Mammary epithelial cell (primary cell): ENCODE measurements at regions of chr19 and their contacts with region 1.

Region 1: DNA sequence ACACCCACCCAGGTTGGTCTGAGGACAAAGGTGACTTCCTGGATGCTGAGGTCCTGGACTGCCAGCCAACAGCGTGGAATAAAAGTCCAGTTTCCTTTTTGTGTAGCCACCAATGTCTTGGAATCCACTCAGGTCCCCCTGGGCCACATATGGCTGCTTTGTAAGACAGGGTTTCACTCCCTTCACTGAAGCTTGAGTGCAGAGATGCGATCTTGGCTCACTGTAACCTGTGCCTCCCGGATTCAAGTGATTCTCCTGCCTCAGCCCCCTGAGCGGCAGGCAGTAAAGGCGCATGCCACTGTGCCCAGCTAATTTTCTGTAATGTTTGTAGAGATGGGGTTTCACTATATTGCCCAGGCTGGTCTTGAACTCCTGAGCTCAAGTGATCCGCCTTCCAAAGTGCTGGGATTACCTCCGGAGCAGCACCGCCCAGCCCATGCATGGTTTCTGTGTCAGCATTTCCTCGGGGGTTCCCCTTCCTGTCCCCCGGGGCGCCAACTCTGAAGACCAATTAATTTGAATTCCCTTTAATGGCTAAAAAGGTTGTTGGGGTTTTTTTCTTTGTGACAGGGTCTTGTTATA is 17.5 kb downstream of the KANK2 start:
- DNase-seq: no peak
- H3K4me3 ChIP-seq: no peak overlapping the region
- H3K27ac ChIP-seq: no peak overlapping the region
- H3K4me1 ChIP-seq: no peaks in the 10 kb centered on the region
- H3K27me3 ChIP-seq: no peaks in the 10 kb centered on the region
- CTCF ChIP-seq: no peak

Region 2: GRCh38 chr19:10927730-10928524 is 251.9 kb before region 1 on chr19:
- CTCF ChIA-PET with region 1: no interaction called
- dilution Hi-C with region 1: no loop called
- in situ Hi-C with region 1: no loop called
- intact Hi-C with region 1: no loop called
- DNase-seq: no peak
- H3K4me3 ChIP-seq: peak overlapping the region; percentile 84 to 98 (median 93)
- H3K27ac ChIP-seq: peak overlapping the region; percentile 32
- H3K4me1 ChIP-seq: peaks cover 18% of the 10 kb centered on the region
- H3K27me3 ChIP-seq: no peaks in the 10 kb centered on the region
- CTCF ChIP-seq: no peak

Region 3: DNA sequence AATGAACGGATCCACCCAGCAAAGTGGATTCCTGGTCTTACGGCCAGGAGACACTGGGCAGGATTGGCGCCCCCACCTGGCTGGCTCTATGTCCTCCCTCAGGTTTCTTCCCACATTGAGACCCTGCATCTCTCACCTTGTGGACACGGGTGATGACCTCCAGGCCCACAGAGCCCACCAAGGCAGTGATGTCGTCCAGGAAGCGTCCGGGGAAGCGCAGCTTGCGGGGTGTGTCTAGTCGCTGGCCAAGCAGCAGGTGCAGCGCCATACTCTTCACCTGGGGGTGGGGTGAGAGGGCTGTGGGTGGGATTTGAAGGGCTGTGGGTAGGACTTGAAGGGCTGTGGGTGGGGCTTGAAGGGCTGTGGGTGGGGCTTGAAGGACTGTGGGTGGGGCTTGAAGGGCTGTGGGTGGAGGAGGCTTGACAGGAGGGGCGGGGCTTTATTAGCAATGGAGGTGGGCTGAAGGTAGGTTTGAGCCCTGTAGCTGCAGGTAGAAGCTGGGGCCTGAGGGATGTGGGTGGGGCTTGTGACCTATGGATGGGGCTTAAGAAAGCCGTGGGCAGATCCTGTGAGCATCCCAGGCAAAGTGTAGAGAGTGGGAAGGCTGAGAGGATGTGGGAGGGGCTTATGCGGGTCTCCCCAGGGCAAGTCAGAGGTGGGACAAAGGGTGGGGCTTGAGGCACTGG is 47.5 kb after region 1 on chr19:
- CTCF ChIA-PET with region 1: no interaction called
- dilution Hi-C with region 1: loop called (anchors 5 kb)
- in situ Hi-C with region 1: no loop called
- intact Hi-C with region 1: no loop called
- DNase-seq: no peak
- H3K4me3 ChIP-seq: no peak overlapping the region
- H3K27ac ChIP-seq: no peak overlapping the region
- H3K4me1 ChIP-seq: no peaks in the 10 kb centered on the region
- H3K27me3 ChIP-seq: no peaks in the 10 kb centered on the region
- CTCF ChIP-seq: peak; percentile 13 to 31

Region 4: DNA sequence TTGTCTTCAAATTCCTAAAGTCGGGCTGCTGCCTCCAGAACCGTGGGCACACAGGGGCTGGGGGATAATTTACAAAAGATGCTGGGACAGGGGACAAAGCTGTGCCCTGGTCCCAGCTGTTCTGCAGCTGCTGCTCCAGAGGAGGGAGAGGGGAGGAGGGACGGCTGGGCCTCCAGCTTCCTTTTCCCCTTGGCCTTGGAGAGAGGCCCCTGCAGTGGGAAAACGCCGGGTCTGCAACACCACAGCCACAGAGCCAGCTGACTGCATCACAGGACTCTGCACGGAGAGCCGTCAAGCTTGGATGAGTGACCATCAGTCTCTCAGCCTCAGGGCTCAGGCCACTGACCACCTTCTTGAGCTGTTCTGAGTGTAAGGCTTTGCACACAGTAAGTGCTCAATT is 76.4 kb after region 1 on chr19:
- CTCF ChIA-PET with region 1: no interaction called
- dilution Hi-C with region 1: loop called (anchors 5 kb)
- in situ Hi-C with region 1: no loop called
- intact Hi-C with region 1: no loop called
- DNase-seq: no peak
- H3K4me3 ChIP-seq: no peak overlapping the region
- H3K27ac ChIP-seq: no peak overlapping the region
- H3K4me1 ChIP-seq: no peaks in the 10 kb centered on the region
- H3K27me3 ChIP-seq: no peaks in the 10 kb centered on the region
- CTCF ChIP-seq: no peak